Calu3 (cell line): ENCODE measurements at regions of chr12 and their contacts with region 1.

Region 1: GRCh38 chr12:93742110-93742934 is 65.1 kb downstream of the CRADD start:
- DNase-seq: peak; percentile 78
- H3K4me3 Mint-ChIP-seq: peak overlapping the region; percentile 64
- H3K27ac Mint-ChIP-seq: peak overlapping the region; percentile 3
- H3K4me1 Mint-ChIP-seq: peaks cover 11% of the 10 kb centered on the region
- H3K27me3 Mint-ChIP-seq: no peaks in the 10 kb centered on the region
- CTCF ChIP-seq: peak; percentile 32

Region 2: GRCh38 chr12:93569656-93570551 is 172.4 kb before region 1 on chr12:
- CTCF ChIA-PET with region 1: interaction called, 10 read pairs
- intact Hi-C with region 1: loop called (anchors 2 kb)
- DNase-seq: peak; percentile 89
- H3K4me3 Mint-ChIP-seq: peak overlapping the region; percentile 90
- H3K27ac Mint-ChIP-seq: peak overlapping the region; percentile 79
- H3K4me1 Mint-ChIP-seq: peaks cover 11% of the 10 kb centered on the region
- H3K27me3 Mint-ChIP-seq: peaks cover 28% of the 10 kb centered on the region
- CTCF ChIP-seq: peak; percentile 83